ENCODE measurements at regions of chr4 and their contacts with region 1.

Region 1: GRCh38 chr4:146095091-146095690 is 80.3 kb upstream of the LSM6 start:
- DNase-seq: no peak
- ATAC-seq: no peak
- H3K4me3 ChIP-seq: no peak overlapping the region
- H3K27ac ChIP-seq: no peak overlapping the region; the same call in 1 of the 2 replicates
- H3K4me1 ChIP-seq: peaks cover 42% of the 10 kb centered on the region
- H3K27me3 ChIP-seq: no peaks in the 10 kb centered on the region
- CTCF ChIP-seq: peak; percentile 66 to 77 (median 77)
- EP300 ChIP-seq: no peak
- POLR2A ChIP-seq: no peak
- RAD21 ChIP-seq: peak; percentile 73

Region 2: DNA sequence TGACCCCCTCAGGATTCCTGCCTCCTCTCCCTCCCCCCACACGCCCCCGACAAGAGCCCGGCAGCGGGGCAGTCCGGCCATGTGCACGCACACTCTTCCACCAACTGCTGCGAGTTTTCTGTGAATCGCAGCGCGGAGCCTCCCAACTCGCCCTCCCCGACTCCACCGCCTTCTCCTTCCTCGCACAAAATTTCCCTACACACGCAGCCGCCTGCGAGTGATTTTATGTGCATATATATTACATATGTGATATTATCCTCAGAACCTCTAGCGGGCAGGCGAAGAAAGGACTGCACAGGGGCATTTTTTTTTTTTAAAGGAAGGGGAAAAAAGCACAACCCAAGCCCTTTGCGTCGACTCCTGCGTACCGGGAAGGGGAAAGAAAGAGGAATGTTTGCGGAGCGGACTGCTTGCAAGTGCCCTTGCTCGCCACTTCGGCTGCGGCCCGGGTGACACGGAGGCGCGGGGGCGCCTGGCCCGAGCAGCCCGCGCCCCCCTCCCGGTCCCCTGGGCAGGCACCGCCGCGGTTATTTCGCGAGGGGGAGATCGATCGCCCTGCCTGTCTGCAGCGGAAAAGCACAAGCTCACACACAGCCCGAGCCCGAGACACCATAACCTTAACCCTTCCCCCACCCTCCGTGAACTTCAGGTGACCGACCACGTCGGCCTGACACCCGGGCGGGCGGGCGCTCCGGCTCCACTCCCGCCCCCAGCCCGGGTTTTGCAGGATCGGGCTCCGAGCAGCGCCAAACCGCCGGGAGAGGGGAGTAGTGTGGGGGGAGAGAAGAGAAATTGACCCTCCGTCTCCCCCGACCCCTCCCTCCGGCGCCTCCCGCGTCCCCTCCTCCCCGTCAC is 158.8 kb before region 1 on chr4:
- CTCF ChIA-PET with region 1: interaction called, 3 read pairs
- POLR2A ChIA-PET with region 1: no interaction called
- RAD21 ChIA-PET with region 1: no interaction called
- SMC1A ChIA-PET with region 1: no interaction called
- in situ Hi-C with region 1: no loop called
- intact Hi-C with region 1: loop called (anchors 5 kb)
- DNase-seq: no peak
- ATAC-seq: peak; percentile 70
- H3K4me3 ChIP-seq: peak overlapping the region; percentile 93
- H3K27ac ChIP-seq: peak overlapping the region; percentile 88
- H3K4me1 ChIP-seq: no peaks in the 10 kb centered on the region
- H3K27me3 ChIP-seq: no peaks in the 10 kb centered on the region
- CTCF ChIP-seq: peak; percentile 2 to 34 (median 19); a peak in 1 of 6 replicates
- EP300 ChIP-seq: no peak
- POLR2A ChIP-seq: peak; percentile 68; the same call in 1 of the 2 replicates
- RAD21 ChIP-seq: 0 out of 2 replicates have a peak, but pooled peaks have one; percentile 17

Region 3: GRCh38 chr4:146029939-146030710 is 65.1 kb before region 1 on chr4:
- CTCF ChIA-PET with region 1: interaction called, 11 read pairs
- POLR2A ChIA-PET with region 1: no interaction called
- RAD21 ChIA-PET with region 1: interaction called, 6 read pairs
- SMC1A ChIA-PET with region 1: interaction called, 11 read pairs
- in situ Hi-C with region 1: no loop called
- intact Hi-C with region 1: loop called (anchors 1 kb)
- DNase-seq: peak; percentile 48
- ATAC-seq: peak; percentile 89
- H3K4me3 ChIP-seq: peak overlapping the region; percentile 56
- H3K27ac ChIP-seq: peak overlapping the region; percentile 88
- H3K4me1 ChIP-seq: peaks cover 45% of the 10 kb centered on the region
- H3K27me3 ChIP-seq: no peaks in the 10 kb centered on the region
- CTCF ChIP-seq: no peak
- EP300 ChIP-seq: no peak
- POLR2A ChIP-seq: no peak
- RAD21 ChIP-seq: 0 out of 2 replicates have a peak, but pooled peaks have one; percentile 22

Region 4: DNA sequence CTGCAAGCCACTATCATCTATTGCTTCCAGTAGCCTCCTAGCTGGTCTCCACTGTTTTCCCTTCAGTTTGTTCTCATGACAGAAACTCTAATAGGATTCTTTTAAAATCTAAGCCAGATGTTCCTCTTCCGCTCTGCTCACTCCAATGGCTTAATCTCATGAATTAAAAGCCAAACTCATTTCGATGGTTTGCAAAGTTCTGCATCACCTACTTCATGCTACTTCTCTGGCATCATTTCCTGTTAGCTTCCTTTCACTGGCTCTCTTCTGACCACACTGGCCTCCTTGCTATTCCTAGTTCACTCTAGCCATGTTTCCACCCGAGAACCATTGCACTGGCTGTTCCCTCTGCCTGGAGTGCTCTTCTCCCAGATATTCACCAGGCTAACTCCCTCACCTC is 21.7 kb before region 1 on chr4:
- CTCF ChIA-PET with region 1: interaction called, 20 read pairs
- POLR2A ChIA-PET with region 1: no interaction called
- RAD21 ChIA-PET with region 1: no interaction called
- SMC1A ChIA-PET with region 1: interaction called, 10 read pairs
- in situ Hi-C with region 1: no loop called
- intact Hi-C with region 1: no loop called
- DNase-seq: no peak
- ATAC-seq: peak; percentile 64
- H3K4me3 ChIP-seq: no peak overlapping the region
- H3K27ac ChIP-seq: no peak overlapping the region
- H3K4me1 ChIP-seq: peaks cover 5% of the 10 kb centered on the region
- H3K27me3 ChIP-seq: no peaks in the 10 kb centered on the region
- CTCF ChIP-seq: no peak
- EP300 ChIP-seq: no peak
- POLR2A ChIP-seq: no peak
- RAD21 ChIP-seq: no peak

Region 5: DNA sequence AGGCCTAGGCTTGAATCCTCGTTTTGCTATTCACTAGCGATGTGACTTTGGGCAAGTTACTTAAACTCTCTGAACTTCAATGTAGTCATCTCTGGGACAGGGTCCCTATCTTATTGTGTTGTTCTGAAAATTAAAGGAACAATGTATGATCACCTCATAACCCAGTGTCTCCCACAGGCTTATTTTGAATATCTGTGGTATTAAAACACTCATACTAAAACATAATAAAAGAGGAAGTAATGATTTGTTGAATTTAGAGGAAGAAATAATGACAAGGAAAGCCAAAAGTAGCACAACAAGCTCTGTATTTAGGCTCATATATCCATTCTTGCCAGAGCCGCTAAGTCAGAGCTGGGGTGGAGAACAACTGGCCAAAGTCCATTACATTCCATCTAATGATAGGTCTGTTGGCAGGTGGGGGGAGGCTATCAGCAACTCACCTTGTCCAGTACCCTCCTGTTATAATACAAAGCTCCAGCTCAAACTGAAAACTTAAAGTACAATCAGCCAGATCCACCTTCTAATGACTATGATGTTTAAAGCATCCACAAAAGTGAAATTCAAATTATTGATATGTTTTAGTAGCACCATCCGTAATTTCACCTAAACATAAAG is 15.8 kb after region 1 on chr4:
- CTCF ChIA-PET with region 1: interaction called, 24 read pairs
- POLR2A ChIA-PET with region 1: no interaction called
- RAD21 ChIA-PET with region 1: interaction called, 3 read pairs
- SMC1A ChIA-PET with region 1: interaction called, 13 read pairs
- in situ Hi-C with region 1: no loop called
- intact Hi-C with region 1: no loop called
- DNase-seq: no peak
- ATAC-seq: peak; percentile 74
- H3K4me3 ChIP-seq: no peak overlapping the region
- H3K27ac ChIP-seq: peak overlapping the region; percentile 61
- H3K4me1 ChIP-seq: peaks cover 28% of the 10 kb centered on the region
- H3K27me3 ChIP-seq: no peaks in the 10 kb centered on the region
- CTCF ChIP-seq: no peak
- EP300 ChIP-seq: no peak
- POLR2A ChIP-seq: no peak
- RAD21 ChIP-seq: no peak

Region 6: GRCh38 chr4:146175541-146176453 is 80.6 kb after region 1 on chr4 and contains the start of gene LSM6:
- CTCF ChIA-PET with region 1: interaction called, 9 read pairs
- POLR2A ChIA-PET with region 1: no interaction called
- RAD21 ChIA-PET with region 1: interaction called, 6 read pairs
- SMC1A ChIA-PET with region 1: interaction called, 20 read pairs
- in situ Hi-C with region 1: no loop called
- intact Hi-C with region 1: loop called (anchors 5 kb)
- DNase-seq: peak; percentile 36
- ATAC-seq: peak; percentile 89
- H3K4me3 ChIP-seq: peak within 1 kb of the TSS; percentile 84
- H3K27ac ChIP-seq: peak within 1 kb of the TSS; percentile 92
- H3K4me1 ChIP-seq: peaks cover 13% of the 10 kb centered on the region
- H3K27me3 ChIP-seq: no peaks in the 10 kb centered on the region
- CTCF ChIP-seq: no peak
- EP300 ChIP-seq: no peak
- POLR2A ChIP-seq: peak; percentile 87
- RAD21 ChIP-seq: no peak
- polyA plus RNA-seq, gene LSM6: 261 to 262 TPM

Region 7: GRCh38 chr4:146522098-146522868 is 427.1 kb after region 1 on chr4:
- CTCF ChIA-PET with region 1: no interaction called
- POLR2A ChIA-PET with region 1: no interaction called
- RAD21 ChIA-PET with region 1: no interaction called
- SMC1A ChIA-PET with region 1: no interaction called
- in situ Hi-C with region 1: no loop called
- intact Hi-C with region 1: loop called (anchors 10 kb)
- DNase-seq: peak; percentile 46
- ATAC-seq: peak; percentile 82
- H3K4me3 ChIP-seq: peak overlapping the region; percentile 98
- H3K27ac ChIP-seq: peak overlapping the region; percentile 88
- H3K4me1 ChIP-seq: no peaks in the 10 kb centered on the region
- H3K27me3 ChIP-seq: no peaks in the 10 kb centered on the region
- CTCF ChIP-seq: no peak
- EP300 ChIP-seq: peak; percentile 33 to 47; a peak in 1 of 4 replicates
- POLR2A ChIP-seq: peak; percentile 83
- RAD21 ChIP-seq: no peak

Measured in GM12878 (cell line).